ENCODE measurements at regions of chr2 and their contacts with region 1.

Region 1: GRCh38 chr2:120693121-120693520 is 42.5 kb upstream of the GLI2 start:
- DNase-seq: no peak
- ATAC-seq: no peak

Region 2: DNA sequence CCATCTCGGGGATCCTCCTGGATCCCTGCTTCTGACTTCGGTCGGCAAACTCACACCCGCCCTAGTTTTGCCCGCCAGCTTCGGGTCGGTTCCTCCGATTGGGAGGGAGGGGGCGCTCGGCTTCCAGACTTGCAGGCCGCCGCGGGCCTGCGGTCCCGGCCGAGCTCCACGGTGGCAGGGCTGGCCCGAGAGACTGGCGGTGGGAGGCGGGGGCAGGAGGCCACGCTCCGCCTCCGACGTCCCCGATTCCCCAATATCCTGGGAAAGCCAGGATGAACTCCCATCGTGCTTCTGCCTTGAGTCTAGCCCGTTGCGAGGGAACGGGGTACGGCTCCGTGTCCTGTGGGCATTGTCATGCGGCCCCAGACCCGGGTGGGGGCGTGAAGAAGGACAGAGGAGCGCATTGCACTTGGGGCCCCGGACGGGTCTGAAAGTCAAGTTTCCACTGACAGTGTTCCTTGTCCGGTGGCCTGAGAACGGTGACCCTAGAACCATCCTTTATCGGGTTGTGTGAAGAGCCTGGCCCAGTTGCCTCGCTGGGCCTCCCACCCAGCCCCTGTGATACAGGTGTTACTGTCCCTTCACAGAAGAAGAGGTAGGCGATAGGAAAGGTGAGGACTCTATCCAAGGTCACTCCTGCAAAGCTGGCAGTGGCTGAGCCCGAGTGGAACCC is 349.6 kb before region 1 on chr2:
- intact Hi-C with region 1: no loop called
- DNase-seq: peak; percentile 91
- ATAC-seq: peak; percentile 83

Region 3: GRCh38 chr2:121080013-121080772 is 387.1 kb after region 1 on chr2:
- intact Hi-C with region 1: loop called (anchors 1 kb)
- DNase-seq: no peak
- ATAC-seq: no peak